ENCODE measurements at regions of chr19 and their contacts with region 1.

Region 1: DNA sequence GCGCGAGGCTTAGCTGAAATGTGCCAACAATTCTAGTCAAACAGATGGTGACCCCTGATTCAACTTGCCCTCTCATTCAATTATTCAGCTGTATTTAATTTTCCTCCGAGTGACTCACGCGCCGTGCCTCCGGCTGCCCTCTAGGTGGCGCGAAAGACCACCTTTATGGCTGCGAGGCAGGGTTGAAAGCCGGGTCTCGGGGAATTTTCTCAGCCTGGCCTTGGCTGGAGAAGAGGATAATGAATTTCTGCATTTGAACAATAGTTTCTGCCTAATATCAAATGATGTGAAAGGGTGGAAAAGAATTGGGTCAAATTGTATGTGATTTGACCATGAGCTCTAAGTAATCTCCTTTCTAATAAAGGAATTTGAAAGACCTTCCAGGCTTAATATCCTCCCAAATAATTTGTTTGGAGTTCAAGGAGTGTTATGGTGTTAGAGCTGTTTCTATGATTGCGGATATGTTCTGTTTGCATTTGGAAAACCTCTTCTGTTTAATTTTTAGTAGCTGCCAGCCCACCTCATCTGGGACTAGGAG is 310.9 kb downstream of the ZNF536 start:
- DNase-seq: peak; percentile 68 to 80
- H3K4me3 ChIP-seq: no peak overlapping the region
- H3K27ac ChIP-seq: no peak overlapping the region
- H3K4me1 ChIP-seq: peaks cover 0 to 2% of the 10 kb centered on the region in 2 donors
- H3K27me3 ChIP-seq: no peaks in the 10 kb centered on the region
- CTCF ChIP-seq: peak; percentile 61 to 90 (median 86)
- POLR2A ChIP-seq: no peak

Region 2: GRCh38 chr19:30647891-30648720 is 35.0 kb before region 1 on chr19:
- intact Hi-C with region 1: no loop called
- DNase-seq: no peak
- H3K4me3 ChIP-seq: no peak overlapping the region
- H3K27ac ChIP-seq: no peak overlapping the region
- H3K4me1 ChIP-seq: peaks cover 0 to 5% of the 10 kb centered on the region in 2 donors
- H3K27me3 ChIP-seq: no peaks in the 10 kb centered on the region
- CTCF ChIP-seq: no peak
- POLR2A ChIP-seq: no peak

Region 3: GRCh38 chr19:30774252-30774766 is 91.2 kb after region 1 on chr19:
- intact Hi-C with region 1: no loop called
- DNase-seq: no peak
- H3K4me3 ChIP-seq: no peak overlapping the region
- H3K27ac ChIP-seq: no peak overlapping the region
- H3K4me1 ChIP-seq: peaks cover 0 to 5% of the 10 kb centered on the region in 2 donors
- H3K27me3 ChIP-seq: no peaks in the 10 kb centered on the region
- CTCF ChIP-seq: no peak
- POLR2A ChIP-seq: no peak

Region 4: GRCh38 chr19:30842926-30843325 is 159.9 kb after region 1 on chr19:
- intact Hi-C with region 1: no loop called
- DNase-seq: no peak
- H3K4me3 ChIP-seq: no peak overlapping the region
- H3K27ac ChIP-seq: no peak overlapping the region
- H3K4me1 ChIP-seq: no peaks in the 10 kb centered on the region
- H3K27me3 ChIP-seq: no peaks in the 10 kb centered on the region
- CTCF ChIP-seq: no peak
- POLR2A ChIP-seq: no peak

Region 5: GRCh38 chr19:31548941-31549340 is 865.9 kb after region 1 on chr19:
- intact Hi-C with region 1: loop called (anchors 10 kb)
- DNase-seq: peak; percentile 41 to 62
- H3K4me3 ChIP-seq: no peak overlapping the region
- H3K27ac ChIP-seq: no peak overlapping the region
- H3K4me1 ChIP-seq: no peaks in the 10 kb centered on the region
- H3K27me3 ChIP-seq: no peaks in the 10 kb centered on the region
- CTCF ChIP-seq: peak in 4 of 6 experiments; percentile 14 to 69 (median 58)
- POLR2A ChIP-seq: no peak

Region 6: DNA sequence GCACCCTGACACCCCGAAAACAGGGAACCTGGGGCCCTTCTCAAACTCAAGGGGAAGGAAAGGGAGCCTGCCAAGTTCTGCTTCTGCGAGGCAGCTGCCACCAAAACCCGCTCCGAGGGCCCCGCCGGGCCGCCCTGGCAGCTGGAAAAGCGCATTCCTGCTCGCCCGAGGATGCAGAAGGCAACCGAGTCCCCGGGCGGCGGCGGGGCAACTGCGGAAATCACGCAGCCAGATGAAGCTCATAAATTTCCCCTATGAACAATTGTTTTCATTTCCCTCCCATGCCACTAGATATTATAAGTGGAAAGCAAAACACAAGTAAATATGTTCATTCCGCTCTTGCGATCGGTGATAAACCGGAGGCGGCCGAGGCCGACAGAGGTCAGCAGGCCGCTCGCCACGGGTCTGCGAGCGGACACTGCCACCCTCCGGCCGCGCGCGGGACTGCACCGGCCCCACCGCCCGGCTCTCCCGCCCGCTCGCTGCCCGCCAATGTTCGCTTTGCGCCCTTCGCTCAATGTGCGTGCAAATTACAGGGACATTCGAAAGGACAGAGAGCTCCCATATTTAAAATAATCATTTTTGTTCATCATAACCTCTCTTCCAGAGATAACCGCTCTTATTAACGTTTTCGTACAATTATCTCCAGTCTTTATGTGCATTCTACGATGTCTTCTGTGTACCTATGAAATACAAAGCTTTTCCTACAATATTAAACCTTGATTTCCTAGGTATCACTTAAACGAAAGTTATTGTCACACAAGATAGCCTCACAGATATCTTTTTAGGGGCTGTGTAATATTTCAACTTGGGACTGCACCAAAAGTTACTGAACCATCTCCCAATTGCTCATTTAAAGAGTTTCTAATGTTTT is 1541.5 kb after region 1 on chr19:
- intact Hi-C with region 1: loop called (anchors 5 kb)
- DNase-seq: peak; percentile 46 to 56
- H3K4me3 ChIP-seq: no peak overlapping the region
- H3K27ac ChIP-seq: no peak overlapping the region
- H3K4me1 ChIP-seq: peaks cover 0 to 3% of the 10 kb centered on the region in 2 donors
- H3K27me3 ChIP-seq: no peaks in the 10 kb centered on the region
- CTCF ChIP-seq: peak; percentile 78 to 100 (median 98)
- POLR2A ChIP-seq: no peak

Measured in thyroid gland (tissue), 4 donors.